ENCODE measurements at regions of chr7 and their contacts with region 1.

Region 1: GRCh38 chr7:23254051-23254681 is 7.6 kb downstream of the GPNMB start:
- DNase-seq: no peak
- ATAC-seq: no peak
- H3K4me3 ChIP-seq: no peak overlapping the region
- H3K4me3 Mint-ChIP-seq: no peak overlapping the region
- H3K27ac ChIP-seq: no peak overlapping the region
- H3K27ac Mint-ChIP-seq: no peak overlapping the region
- H3K4me1 ChIP-seq: no peaks in the 10 kb centered on the region
- H3K4me1 Mint-ChIP-seq: no peaks in the 10 kb centered on the region
- H3K27me3 ChIP-seq: peaks cover 0 to 5% of the 10 kb centered on the region in 2 donors
- H3K27me3 Mint-ChIP-seq: peaks cover 40 to 63% (median 51%) of the 10 kb centered on the region in 5 donors

Region 2: GRCh38 chr7:23093546-23093945 is 160.6 kb before region 1 on chr7:
- CTCF ChIA-PET with region 1: no interaction called
- POLR2A ChIA-PET with region 1: no interaction called
- intact Hi-C with region 1: loop called in 1 of 2 experiments (anchors 10 kb)
- DNase-seq: no peak
- ATAC-seq: no peak
- H3K4me3 ChIP-seq: no peak overlapping the region
- H3K4me3 Mint-ChIP-seq: no peak overlapping the region
- H3K27ac ChIP-seq: no peak overlapping the region
- H3K27ac Mint-ChIP-seq: no peak overlapping the region
- H3K4me1 ChIP-seq: no peaks in the 10 kb centered on the region
- H3K4me1 Mint-ChIP-seq: no peaks in the 10 kb centered on the region
- H3K27me3 ChIP-seq: no peaks in the 10 kb centered on the region
- H3K27me3 Mint-ChIP-seq: peaks cover 0 to 12% (median 3%) of the 10 kb centered on the region in 5 donors

Region 3: GRCh38 chr7:23332910-23333612 is 78.9 kb after region 1 on chr7:
- CTCF ChIA-PET with region 1: no interaction called
- POLR2A ChIA-PET with region 1: no interaction called
- intact Hi-C with region 1: no loop called
- DNase-seq: no peak
- ATAC-seq: no peak
- H3K4me3 ChIP-seq: no peak overlapping the region
- H3K4me3 Mint-ChIP-seq: no peak overlapping the region
- H3K27ac ChIP-seq: no peak overlapping the region
- H3K27ac Mint-ChIP-seq: no peak overlapping the region
- H3K4me1 ChIP-seq: no peaks in the 10 kb centered on the region
- H3K4me1 Mint-ChIP-seq: peaks cover 0 to 4% (median 0%) of the 10 kb centered on the region in 7 donors
- H3K27me3 ChIP-seq: no peaks in the 10 kb centered on the region
- H3K27me3 Mint-ChIP-seq: peaks cover 0 to 16% (median 3%) of the 10 kb centered on the region in 5 donors